ENCODE measurements at regions of chr7 and their contacts with region 1.

Region 1: DNA sequence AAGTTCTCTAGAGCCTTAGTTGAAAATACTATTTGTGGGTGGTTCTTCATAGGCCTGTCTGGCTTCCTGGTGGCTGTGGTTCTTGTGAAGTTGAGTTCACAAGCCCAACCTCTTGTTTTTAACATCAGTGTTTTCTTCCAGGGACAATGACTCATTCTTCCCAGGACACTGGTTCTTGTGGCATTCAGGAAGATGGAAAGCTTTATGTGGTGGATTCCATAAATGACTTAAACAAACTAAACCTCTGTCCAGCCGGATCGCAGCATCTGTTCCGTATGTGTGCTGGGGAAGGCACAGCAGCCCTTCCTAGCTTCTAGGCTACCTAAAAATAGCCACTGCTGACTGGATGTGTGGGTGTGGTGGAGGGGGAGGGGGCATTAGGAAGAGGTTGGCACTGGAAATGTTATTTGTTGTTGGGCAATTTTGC is 3.9 kb downstream of the LSMEM1 start:
- DNase-seq: no peak
- ATAC-seq: no peak
- H3K4me3 Mint-ChIP-seq: no peak overlapping the region
- H3K27ac Mint-ChIP-seq: no peak overlapping the region
- H3K4me1 Mint-ChIP-seq: peaks cover 8% of the 10 kb centered on the region
- H3K27me3 Mint-ChIP-seq: no peaks in the 10 kb centered on the region

Region 2: GRCh38 chr7:112495810-112496462 is 11.3 kb after region 1 on chr7:
- CTCF ChIA-PET with region 1: interaction called, 11 read pairs
- POLR2A ChIA-PET with region 1: no interaction called
- intact Hi-C with region 1: no loop called
- DNase-seq: peak; percentile 58
- ATAC-seq: no peak
- H3K4me3 Mint-ChIP-seq: no peak overlapping the region
- H3K27ac Mint-ChIP-seq: no peak overlapping the region
- H3K4me1 Mint-ChIP-seq: no peaks in the 10 kb centered on the region
- H3K27me3 Mint-ChIP-seq: peaks cover 4% of the 10 kb centered on the region

Region 3: GRCh38 chr7:112678626-112679025 is 193.9 kb after region 1 on chr7:
- CTCF ChIA-PET with region 1: no interaction called
- POLR2A ChIA-PET with region 1: no interaction called
- intact Hi-C with region 1: no loop called
- DNase-seq: no peak
- ATAC-seq: no peak
- H3K4me3 Mint-ChIP-seq: no peak overlapping the region
- H3K27ac Mint-ChIP-seq: no peak overlapping the region
- H3K4me1 Mint-ChIP-seq: no peaks in the 10 kb centered on the region
- H3K27me3 Mint-ChIP-seq: peaks cover 2% of the 10 kb centered on the region

Measured in activated CD4-positive, alpha-beta T cell treated with anti-CD3 and anti-CD28 coated beads for 36 hours (primary cell).